PC-3 (cell line): ENCODE measurements at regions of chr2 and their contacts with region 1.

Region 1: GRCh38 chr2:217223222-217223930 is 363.5 kb upstream of the TNP1 start:
- DNase-seq: peak; percentile 92
- ATAC-seq: peak; percentile 95
- H3K4me3 ChIP-seq: peak overlapping the region; percentile 14; the same call in 1 of the 2 replicates
- H3K27ac ChIP-seq: peak overlapping the region; percentile 87
- H3K4me1 ChIP-seq: peaks cover 21% of the 10 kb centered on the region
- H3K27me3 ChIP-seq: no peaks in the 10 kb centered on the region
- CTCF ChIP-seq: no peak

Region 2: GRCh38 chr2:217049956-217050355 is 173.4 kb before region 1 on chr2:
- CTCF ChIA-PET with region 1: no interaction called
- POLR2A ChIA-PET with region 1: no interaction called
- intact Hi-C with region 1: no loop called
- DNase-seq: no peak
- ATAC-seq: no peak
- H3K4me3 ChIP-seq: no peak overlapping the region
- H3K27ac ChIP-seq: no peak overlapping the region
- H3K4me1 ChIP-seq: peaks cover 12% of the 10 kb centered on the region
- H3K27me3 ChIP-seq: no peaks in the 10 kb centered on the region
- CTCF ChIP-seq: no peak

Region 3: GRCh38 chr2:217064234-217065024 is 158.9 kb before region 1 on chr2:
- CTCF ChIA-PET with region 1: no interaction called
- POLR2A ChIA-PET with region 1: no interaction called
- intact Hi-C with region 1: loop called (anchors 10 kb)
- DNase-seq: no peak
- ATAC-seq: no peak
- H3K4me3 ChIP-seq: no peak overlapping the region
- H3K27ac ChIP-seq: no peak overlapping the region
- H3K4me1 ChIP-seq: peaks cover 22% of the 10 kb centered on the region
- H3K27me3 ChIP-seq: no peaks in the 10 kb centered on the region
- CTCF ChIP-seq: no peak

Region 4: GRCh38 chr2:217160978-217161973 is 62.1 kb before region 1 on chr2:
- CTCF ChIA-PET with region 1: interaction called, 3 read pairs
- POLR2A ChIA-PET with region 1: no interaction called
- intact Hi-C with region 1: loop called (anchors 1 kb)
- DNase-seq: peak; percentile 50
- ATAC-seq: no peak
- H3K4me3 ChIP-seq: no peak overlapping the region
- H3K27ac ChIP-seq: peak overlapping the region; percentile 91
- H3K4me1 ChIP-seq: peaks cover 35% of the 10 kb centered on the region
- H3K27me3 ChIP-seq: no peaks in the 10 kb centered on the region
- CTCF ChIP-seq: no peak

Region 5: GRCh38 chr2:217204358-217204757 is 19.0 kb before region 1 on chr2:
- CTCF ChIA-PET with region 1: no interaction called
- POLR2A ChIA-PET with region 1: no interaction called
- intact Hi-C with region 1: no loop called
- DNase-seq: peak; percentile 56
- ATAC-seq: no peak
- H3K4me3 ChIP-seq: no peak overlapping the region
- H3K27ac ChIP-seq: no peak overlapping the region
- H3K4me1 ChIP-seq: no peaks in the 10 kb centered on the region
- H3K27me3 ChIP-seq: no peaks in the 10 kb centered on the region
- CTCF ChIP-seq: no peak

Region 6: GRCh38 chr2:217242947-217243346 is 19.6 kb after region 1 on chr2:
- CTCF ChIA-PET with region 1: no interaction called
- POLR2A ChIA-PET with region 1: no interaction called
- intact Hi-C with region 1: loop called (anchors 1 kb)
- DNase-seq: no peak
- ATAC-seq: no peak
- H3K4me3 ChIP-seq: no peak overlapping the region
- H3K27ac ChIP-seq: no peak overlapping the region
- H3K4me1 ChIP-seq: peaks cover 19% of the 10 kb centered on the region
- H3K27me3 ChIP-seq: no peaks in the 10 kb centered on the region
- CTCF ChIP-seq: no peak

Region 7: GRCh38 chr2:217277646-217278398 is 54.4 kb after region 1 on chr2:
- CTCF ChIA-PET with region 1: no interaction called
- POLR2A ChIA-PET with region 1: no interaction called
- intact Hi-C with region 1: loop called (anchors 2 kb)
- DNase-seq: peak; percentile 96
- ATAC-seq: peak; percentile 72
- H3K4me3 ChIP-seq: no peak overlapping the region
- H3K27ac ChIP-seq: peak overlapping the region; percentile 94
- H3K4me1 ChIP-seq: peaks cover 50% of the 10 kb centered on the region
- H3K27me3 ChIP-seq: no peaks in the 10 kb centered on the region
- CTCF ChIP-seq: no peak

Region 8: GRCh38 chr2:217367464-217367863 is 144.1 kb after region 1 on chr2:
- CTCF ChIA-PET with region 1: no interaction called
- POLR2A ChIA-PET with region 1: no interaction called
- intact Hi-C with region 1: loop called (anchors 5 kb)
- DNase-seq: peak; percentile 90
- ATAC-seq: peak; percentile 79
- H3K4me3 ChIP-seq: no peak overlapping the region
- H3K27ac ChIP-seq: peak overlapping the region; percentile 94
- H3K4me1 ChIP-seq: peaks cover 62% of the 10 kb centered on the region
- H3K27me3 ChIP-seq: no peaks in the 10 kb centered on the region
- CTCF ChIP-seq: no peak